ENCODE measurements at regions of chr6 and their contacts with region 1.

Region 1: DNA sequence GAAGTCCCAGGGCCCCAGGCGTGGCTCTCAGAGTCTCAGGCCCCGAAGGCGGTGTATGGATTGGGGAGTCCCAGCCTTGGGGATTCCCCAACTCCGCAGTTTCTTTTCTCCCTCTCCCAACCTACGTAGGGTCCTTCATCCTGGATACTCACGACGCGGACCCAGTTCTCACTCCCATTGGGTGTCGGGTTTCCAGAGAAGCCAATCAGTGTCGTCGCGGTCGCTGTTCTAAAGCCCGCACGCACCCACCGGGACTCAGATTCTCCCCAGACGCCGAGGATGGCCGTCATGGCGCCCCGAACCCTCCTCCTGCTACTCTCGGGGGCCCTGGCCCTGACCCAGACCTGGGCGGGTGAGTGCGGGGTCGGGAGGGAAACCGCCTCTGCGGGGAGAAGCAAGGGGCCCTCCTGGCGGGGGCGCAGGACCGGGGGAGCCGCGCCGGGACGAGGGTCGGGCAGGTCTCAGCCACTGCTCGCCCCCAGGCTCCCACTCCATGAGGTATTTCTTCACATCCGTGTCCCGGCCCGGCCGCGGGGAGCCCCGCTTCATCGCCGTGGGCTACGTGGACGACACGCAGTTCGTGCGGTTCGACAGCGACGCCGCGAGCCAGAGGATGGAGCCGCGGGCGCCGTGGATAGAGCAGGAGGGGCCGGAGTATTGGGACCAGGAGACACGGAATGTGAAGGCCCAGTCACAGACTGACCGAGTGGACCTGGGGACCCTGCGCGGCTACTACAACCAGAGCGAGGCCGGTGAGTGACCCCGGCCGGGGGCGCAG is at the start of gene HLA-A:
- DNase-seq: peak; percentile 92
- ATAC-seq: peak; percentile 93
- H3K4me3 ChIP-seq: peak within 1 kb of the TSS; percentile 73
- H3K27ac ChIP-seq: peak within 1 kb of the TSS; percentile 99
- H3K4me1 ChIP-seq: no peaks in the 10 kb centered on the region
- H3K27me3 ChIP-seq: no peaks in the 10 kb centered on the region
- CTCF ChIP-seq: no peak
- EP300 ChIP-seq: 0 out of 4 replicates have a peak, but pooled peaks of 1 of the 2 experiments have one; percentile 34
- POLR2A ChIP-seq: peak; percentile 98
- RAD21 ChIP-seq: no peak
- polyA plus RNA-seq, gene HLA-A: 129 to 329 TPM

Region 2: DNA sequence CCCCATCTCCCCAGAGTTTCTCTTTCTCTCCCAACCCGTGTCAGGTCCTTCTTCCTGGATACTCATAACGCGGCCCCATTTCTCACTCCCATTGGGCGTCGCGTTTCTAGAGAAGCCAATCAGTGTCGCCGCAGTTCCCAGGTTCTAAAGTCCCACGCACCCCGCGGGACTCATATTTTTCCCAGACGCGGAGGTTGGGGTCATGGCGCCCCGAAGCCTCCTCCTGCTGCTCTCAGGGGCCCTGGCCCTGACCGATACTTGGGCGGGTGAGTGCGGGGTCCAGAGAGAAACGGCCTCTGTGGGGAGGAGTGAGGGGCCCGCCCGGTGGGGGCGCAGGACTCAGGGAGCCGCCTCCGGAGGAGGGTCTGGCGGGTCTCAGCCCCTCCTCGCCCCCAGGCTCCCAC is 219.2 kb before region 1 on chr6 and contains the start of gene HLA-F:
- CTCF ChIA-PET with region 1: no interaction called
- POLR2A ChIA-PET with region 1: no interaction called
- RAD21 ChIA-PET with region 1: no interaction called
- SMC1A ChIA-PET with region 1: no interaction called
- in situ Hi-C with region 1: no loop called
- intact Hi-C with region 1: loop called (anchors 10 kb)
- DNase-seq: peak; percentile 92
- ATAC-seq: peak; percentile 89
- H3K4me3 ChIP-seq: peak within 1 kb of the TSS; percentile 98
- H3K27ac ChIP-seq: peak within 1 kb of the TSS; percentile 99
- H3K4me1 ChIP-seq: peaks cover 15% of the 10 kb centered on the region
- H3K27me3 ChIP-seq: no peaks in the 10 kb centered on the region
- CTCF ChIP-seq: 0 out of 6 replicates have a peak, but pooled peaks of 1 of the 3 experiments have one; percentile 5
- EP300 ChIP-seq: 0 out of 4 replicates have a peak, but pooled peaks of 1 of the 2 experiments have one; percentile 27
- POLR2A ChIP-seq: peak; percentile 79
- RAD21 ChIP-seq: no peak
- polyA plus RNA-seq, gene HLA-F: 30.1 to 107 TPM

Region 3: GRCh38 chr6:29887819-29888776 is 54.4 kb before region 1 on chr6:
- CTCF ChIA-PET with region 1: interaction called, 6 read pairs
- POLR2A ChIA-PET with region 1: interaction called, 3 read pairs
- RAD21 ChIA-PET with region 1: no interaction called
- SMC1A ChIA-PET with region 1: interaction called, 5 read pairs
- in situ Hi-C with region 1: no loop called
- intact Hi-C with region 1: loop called (anchors 1 kb)
- DNase-seq: peak; percentile 25
- ATAC-seq: peak; percentile 92
- H3K4me3 ChIP-seq: peak overlapping the region; percentile 86
- H3K27ac ChIP-seq: peak overlapping the region; percentile 75
- H3K4me1 ChIP-seq: no peaks in the 10 kb centered on the region
- H3K27me3 ChIP-seq: no peaks in the 10 kb centered on the region
- CTCF ChIP-seq: no peak
- EP300 ChIP-seq: no peak
- POLR2A ChIP-seq: peak; percentile 83
- RAD21 ChIP-seq: no peak

Region 4: DNA sequence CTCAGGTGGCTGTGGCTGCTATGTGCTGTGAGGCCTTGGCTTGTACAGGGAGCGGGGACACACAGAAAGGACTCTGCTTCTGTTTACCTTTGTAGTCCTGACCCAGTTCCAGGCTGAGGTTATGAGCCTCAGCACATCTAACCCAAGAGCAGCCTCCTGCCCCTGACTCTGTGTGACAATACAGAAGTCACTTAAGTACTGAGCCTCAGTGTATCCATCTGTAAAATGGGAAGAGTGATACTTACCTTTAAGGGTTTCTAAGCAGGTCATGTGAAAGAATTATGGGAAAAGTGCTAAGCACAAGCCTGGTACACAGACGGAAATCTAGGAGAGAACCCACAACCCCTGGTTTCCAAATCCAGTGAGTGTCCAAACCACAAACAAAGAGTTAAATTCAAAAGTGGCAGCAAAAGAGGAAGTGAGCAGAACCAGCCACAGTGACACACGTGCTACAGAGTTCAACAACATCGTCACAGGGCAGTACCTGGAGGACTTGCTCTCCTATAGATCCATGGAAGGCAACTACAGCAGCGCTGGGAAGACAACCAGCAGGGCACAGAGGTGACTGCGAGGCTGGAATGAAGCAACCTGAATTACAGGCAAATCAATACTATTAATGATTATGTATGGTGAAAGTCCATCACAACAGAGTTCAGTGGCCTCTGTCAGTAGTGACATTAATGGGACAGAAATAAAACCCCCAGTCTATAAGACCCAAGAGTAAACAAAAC is 258.3 kb after region 1 on chr6:
- CTCF ChIA-PET with region 1: no interaction called
- POLR2A ChIA-PET with region 1: no interaction called
- RAD21 ChIA-PET with region 1: no interaction called
- SMC1A ChIA-PET with region 1: no interaction called
- in situ Hi-C with region 1: no loop called
- intact Hi-C with region 1: no loop called
- DNase-seq: peak; percentile 37
- ATAC-seq: peak; percentile 93
- H3K4me3 ChIP-seq: no peak overlapping the region
- H3K27ac ChIP-seq: peak overlapping the region; percentile 38
- H3K4me1 ChIP-seq: peaks cover 25% of the 10 kb centered on the region
- H3K27me3 ChIP-seq: no peaks in the 10 kb centered on the region
- CTCF ChIP-seq: no peak
- EP300 ChIP-seq: peak; percentile 54 to 65; a peak in 1 of 4 replicates
- POLR2A ChIP-seq: no peak
- RAD21 ChIP-seq: no peak

Region 5: GRCh38 chr6:30238174-30238795 is 295.8 kb after region 1 on chr6:
- CTCF ChIA-PET with region 1: no interaction called
- POLR2A ChIA-PET with region 1: no interaction called
- RAD21 ChIA-PET with region 1: no interaction called
- SMC1A ChIA-PET with region 1: no interaction called
- in situ Hi-C with region 1: no loop called
- intact Hi-C with region 1: no loop called
- DNase-seq: no peak
- ATAC-seq: peak; percentile 82
- H3K4me3 ChIP-seq: no peak overlapping the region
- H3K27ac ChIP-seq: no peak overlapping the region
- H3K4me1 ChIP-seq: no peaks in the 10 kb centered on the region
- H3K27me3 ChIP-seq: no peaks in the 10 kb centered on the region; a peak in 1 of 4 replicates
- CTCF ChIP-seq: peak; percentile 52 to 76 (median 60)
- EP300 ChIP-seq: no peak
- POLR2A ChIP-seq: no peak
- RAD21 ChIP-seq: peak; percentile 77

Region 6: DNA sequence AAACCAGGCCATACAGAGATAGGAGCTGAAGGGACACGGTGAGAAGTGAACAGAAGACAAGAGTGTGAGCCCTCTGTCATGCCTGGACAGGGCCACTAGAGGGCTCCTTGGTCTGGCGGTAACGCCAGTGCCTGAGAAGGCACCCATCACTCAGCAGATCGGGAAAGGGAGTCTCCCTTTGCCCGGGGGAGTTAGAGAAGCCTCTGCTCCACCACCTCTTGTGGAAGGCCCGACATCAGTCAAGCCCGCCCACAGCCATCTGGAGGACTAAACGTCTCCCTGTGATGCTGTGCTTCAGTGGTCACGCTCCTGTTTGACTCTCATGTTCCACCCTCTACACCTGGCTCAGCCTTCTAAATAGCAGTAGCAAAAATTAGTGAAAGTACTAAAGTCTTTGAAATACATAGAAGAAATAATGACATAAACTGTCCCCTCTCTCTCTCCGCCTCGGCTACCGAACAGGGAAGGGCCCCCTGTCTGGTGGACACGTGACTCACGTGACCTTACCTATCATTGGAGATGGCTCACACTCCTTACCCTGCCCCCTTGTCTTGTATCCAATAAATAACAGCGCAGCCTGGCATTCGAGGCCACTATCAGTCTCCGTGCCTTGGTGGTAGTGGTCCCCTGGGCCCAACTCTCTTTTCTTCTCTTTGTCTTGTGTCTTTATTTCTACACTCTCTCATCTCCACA is 469.2 kb after region 1 on chr6:
- CTCF ChIA-PET with region 1: no interaction called
- POLR2A ChIA-PET with region 1: no interaction called
- RAD21 ChIA-PET with region 1: no interaction called
- SMC1A ChIA-PET with region 1: no interaction called
- in situ Hi-C with region 1: no loop called
- intact Hi-C with region 1: no loop called
- DNase-seq: no peak
- ATAC-seq: peak; percentile 67
- H3K4me3 ChIP-seq: no peak overlapping the region
- H3K27ac ChIP-seq: no peak overlapping the region
- H3K4me1 ChIP-seq: no peaks in the 10 kb centered on the region
- H3K27me3 ChIP-seq: peaks cover 0 to 3% of the 10 kb centered on the region in 2 experiments
- CTCF ChIP-seq: peak; percentile 54 to 90 (median 78)
- EP300 ChIP-seq: no peak
- POLR2A ChIP-seq: no peak
- RAD21 ChIP-seq: peak; percentile 51; the same call in 1 of the 2 replicates

Measured in GM12878 (cell line).